Aorta (tissue), 5 donors: ENCODE measurements at regions of chr9 and their contacts with region 1.

Region 1: DNA sequence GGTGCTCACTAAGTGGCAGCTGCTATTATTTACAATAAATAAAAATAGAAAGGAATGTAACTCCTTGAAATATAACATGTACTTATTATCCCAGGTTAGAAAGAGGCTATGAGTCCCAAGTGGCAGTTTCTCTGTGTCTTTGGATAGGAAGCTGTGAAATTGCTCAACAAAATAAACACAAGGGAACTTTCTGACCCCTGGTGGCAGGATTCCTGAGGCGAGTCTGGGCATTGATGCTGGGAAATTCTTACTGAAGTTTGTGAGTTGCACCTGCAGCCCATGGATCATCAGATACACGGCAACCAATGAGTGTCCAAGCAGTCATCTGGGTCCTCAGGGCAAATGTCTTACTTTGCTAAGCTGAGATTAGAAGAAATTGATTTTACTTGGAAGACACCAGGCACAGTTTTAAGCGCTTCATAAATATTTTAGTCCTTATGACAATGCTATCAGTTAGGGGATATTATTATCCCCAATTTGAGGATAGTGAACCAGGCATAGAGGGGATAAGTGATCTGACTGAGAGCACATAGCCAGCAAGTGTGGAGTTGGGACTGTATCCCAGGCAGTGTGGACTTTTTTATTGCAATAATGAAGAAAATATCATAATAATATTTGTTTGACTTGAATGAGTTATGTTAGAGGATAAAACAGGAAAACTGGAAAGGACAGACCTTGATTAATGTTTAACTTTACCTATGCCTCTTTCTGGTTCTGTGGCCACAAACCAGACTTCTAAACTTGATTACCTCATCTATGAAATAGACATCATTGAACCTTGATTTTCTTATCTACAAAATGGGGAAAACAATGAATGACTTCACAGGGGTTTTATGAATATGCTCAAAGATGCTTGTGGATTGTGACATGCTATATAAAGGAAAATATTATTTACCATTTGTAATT is 265.5 kb upstream of the ADAMTSL1 start:
- DNase-seq: no peak
- ATAC-seq: peak; percentile 44
- H3K4me3 ChIP-seq: no peak overlapping the region
- H3K27ac ChIP-seq: no peak overlapping the region
- H3K4me1 ChIP-seq: peaks cover 0 to 4% of the 10 kb centered on the region in 2 donors
- H3K27me3 ChIP-seq: no peaks in the 10 kb centered on the region

Region 2: DNA sequence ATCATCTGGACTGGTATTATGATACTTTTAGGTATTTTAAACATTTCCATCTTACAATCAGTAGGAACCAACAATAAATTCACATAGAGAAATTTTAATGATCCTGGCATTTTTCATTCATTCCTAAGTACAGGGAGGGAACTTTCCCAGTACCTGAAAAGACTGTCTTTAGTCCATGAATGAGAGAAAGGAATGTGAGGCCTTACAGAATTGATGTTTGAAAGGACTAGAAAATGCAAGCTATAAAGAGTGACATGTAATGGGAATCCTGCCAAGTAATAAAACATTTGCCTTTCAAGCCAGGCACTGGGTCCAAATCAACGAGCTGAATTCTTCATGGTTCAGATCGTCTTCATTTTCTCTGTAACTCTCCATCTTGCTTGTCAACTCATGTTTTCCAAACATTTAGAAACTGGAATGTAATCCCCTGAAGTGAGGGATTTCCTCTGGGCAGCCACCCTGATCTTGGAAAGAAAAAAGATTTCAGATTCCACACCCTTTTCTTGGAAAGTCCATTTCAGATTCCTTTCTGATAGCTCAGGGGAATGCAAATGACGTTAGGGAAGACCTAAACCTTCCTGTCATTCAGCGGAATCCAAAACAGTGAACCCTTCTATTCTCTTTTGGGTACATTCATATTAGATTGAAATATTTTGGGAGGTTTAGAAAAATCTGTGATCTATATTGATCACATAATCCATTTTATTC is 313.8 kb before region 1 on chr9:
- intact Hi-C with region 1: loop called in 1 of 2 experiments (anchors 5 kb)
- DNase-seq: no peak
- ATAC-seq: no peak
- H3K4me3 ChIP-seq: no peak overlapping the region
- H3K27ac ChIP-seq: no peak overlapping the region
- H3K4me1 ChIP-seq: no peaks in the 10 kb centered on the region
- H3K27me3 ChIP-seq: no peaks in the 10 kb centered on the region

Region 3: GRCh38 chr9:17906176-17906840 is 302.1 kb before region 1 on chr9:
- intact Hi-C with region 1: loop called in 1 of 2 experiments (anchors 5 kb)
- DNase-seq: peak; percentile 64 to 79
- ATAC-seq: peak; percentile 74
- H3K4me3 ChIP-seq: peak overlapping the region; percentile 65 to 76
- H3K27ac ChIP-seq: peak overlapping the region in 1 of 2 donors; percentile 33
- H3K4me1 ChIP-seq: no peaks in the 10 kb centered on the region
- H3K27me3 ChIP-seq: no peaks in the 10 kb centered on the region